Aorta (tissue), 5 donors: ENCODE measurements at regions of chr10 and their contacts with region 1.

Region 1: GRCh38 chr10:29740981-29741545 is 106.3 kb upstream of the SVIL start:
- DNase-seq: no peak
- ATAC-seq: no peak
- H3K4me3 ChIP-seq: no peak overlapping the region
- H3K27ac ChIP-seq: peak overlapping the region; percentile 30 to 99
- H3K4me1 ChIP-seq: no peaks in the 10 kb centered on the region
- H3K27me3 ChIP-seq: no peaks in the 10 kb centered on the region

Region 2: DNA sequence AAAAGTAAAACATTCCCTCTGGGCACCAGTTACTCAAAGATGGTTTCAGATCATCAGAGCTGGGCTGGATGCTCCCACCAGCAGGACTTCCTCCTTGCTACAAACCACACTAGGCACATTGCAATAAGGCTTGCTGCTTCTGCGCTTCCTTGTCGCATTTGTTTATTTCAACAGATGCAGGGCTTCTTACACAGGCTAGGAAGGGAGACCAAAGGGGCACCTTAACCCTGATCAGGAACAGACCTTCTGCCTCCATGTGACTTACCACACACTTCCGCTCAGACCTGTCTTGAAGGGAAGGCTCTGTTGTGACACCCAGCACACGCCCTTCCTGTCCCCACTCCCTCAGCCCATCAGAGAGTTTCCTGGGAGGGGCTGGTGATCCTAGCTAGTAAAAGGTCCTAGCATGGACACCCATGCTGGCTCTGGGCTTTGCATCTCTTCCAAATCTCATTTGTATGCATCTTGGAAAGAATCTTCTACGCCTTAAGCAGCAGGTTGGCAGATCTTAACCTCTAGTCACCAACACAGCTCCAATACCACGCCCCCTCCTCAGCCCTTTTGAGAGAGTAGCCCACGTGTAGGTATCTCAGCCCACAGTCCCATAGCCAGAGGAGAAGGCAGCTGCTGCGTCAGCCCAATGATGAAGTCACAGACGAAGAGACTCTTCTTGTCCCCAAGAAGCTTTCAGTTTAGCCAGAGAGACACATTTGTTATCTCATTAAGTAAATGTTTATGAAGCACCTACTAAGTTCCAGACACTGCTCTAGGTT is 59.2 kb before region 1 on chr10:
- intact Hi-C with region 1: no loop called
- DNase-seq: no peak
- ATAC-seq: peak; percentile 71
- H3K4me3 ChIP-seq: no peak overlapping the region
- H3K27ac ChIP-seq: peak overlapping the region in 1 of 2 donors; percentile 52
- H3K4me1 ChIP-seq: peaks cover 3% of the 10 kb centered on the region in 2 donors
- H3K27me3 ChIP-seq: no peaks in the 10 kb centered on the region

Region 3: GRCh38 chr10:29784175-29784773 is 43.2 kb after region 1 on chr10:
- intact Hi-C with region 1: loop called (anchors 5 kb)
- DNase-seq: peak in 1 of 2 donors; percentile 78
- ATAC-seq: peak; percentile 94
- H3K4me3 ChIP-seq: no peak overlapping the region
- H3K27ac ChIP-seq: peak overlapping the region in 1 of 2 donors; percentile 95
- H3K4me1 ChIP-seq: peaks cover 0 to 4% of the 10 kb centered on the region in 2 donors
- H3K27me3 ChIP-seq: no peaks in the 10 kb centered on the region